ENCODE measurements at regions of chr1 and their contacts with region 1.

Region 1: DNA sequence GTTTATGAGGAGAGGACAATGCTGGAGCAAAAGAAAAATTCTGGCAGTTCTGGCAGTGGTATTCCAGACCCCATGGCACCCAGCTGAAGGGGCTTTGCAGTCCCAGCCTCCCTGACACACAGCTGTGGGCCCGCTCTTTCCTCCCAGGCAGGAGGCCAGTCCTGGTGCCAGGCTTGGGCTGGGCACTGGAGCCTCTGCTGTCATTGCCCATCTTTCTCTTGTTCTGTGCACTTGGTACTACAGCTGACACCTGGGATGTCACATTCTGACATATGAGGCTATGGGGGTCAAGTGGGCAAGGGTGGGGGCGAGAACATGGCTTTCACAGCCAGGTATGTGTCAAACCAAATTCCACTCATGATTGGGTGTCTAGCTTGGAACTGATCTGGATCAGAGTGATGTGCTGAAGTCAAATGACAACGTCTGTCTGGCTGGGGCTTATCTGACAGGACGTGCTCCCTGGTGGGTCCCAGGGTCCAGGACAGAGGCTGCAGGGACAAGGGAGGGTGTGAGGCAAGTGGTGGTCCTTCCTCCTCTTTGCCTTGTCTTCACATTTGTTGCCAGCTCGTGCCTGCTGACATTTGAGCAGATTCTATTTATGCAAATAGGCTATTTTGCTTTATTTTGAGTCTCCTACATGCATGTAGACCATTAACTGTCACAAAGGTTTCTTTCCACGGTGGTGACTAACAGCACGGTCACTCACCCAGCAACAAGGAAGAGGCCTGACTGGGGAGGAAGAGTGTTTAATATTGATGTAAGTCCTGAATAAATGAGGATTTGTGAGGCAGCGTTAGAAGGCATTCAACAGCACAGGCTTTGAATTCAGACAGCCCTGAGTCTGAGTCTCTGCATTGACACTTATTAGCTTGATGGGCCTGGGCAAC is 336.3 kb downstream of the PBX1 start:
- DNase-seq: peak in 1 of 2 donors; percentile 42
- ATAC-seq: peak in 7 of 8 donors; percentile 44 to 81 (median 67)
- H3K4me3 ChIP-seq: no peak overlapping the region
- H3K27ac ChIP-seq: peak overlapping the region in 1 of 10 donors; percentile 30
- H3K4me1 ChIP-seq: peaks cover 0 to 5% (median 0%) of the 10 kb centered on the region in 9 donors
- H3K27me3 ChIP-seq: no peaks in the 10 kb centered on the region
- CTCF ChIP-seq: no peak

Region 2: GRCh38 chr1:164905869-164906268 is 10.6 kb after region 1 on chr1:
- intact Hi-C with region 1: loop called in 1 of 10 experiments (anchors 1 kb)
- DNase-seq: no peak
- ATAC-seq: no peak
- H3K4me3 ChIP-seq: no peak overlapping the region
- H3K27ac ChIP-seq: no peak overlapping the region
- H3K4me1 ChIP-seq: peaks cover 0 to under 1% (median 0%) of the 10 kb centered on the region in 9 donors
- H3K27me3 ChIP-seq: no peaks in the 10 kb centered on the region
- CTCF ChIP-seq: no peak

Measured in heart right ventricle (tissue), 16 donors.